ENCODE measurements at regions of chr3 and their contacts with region 1.

Region 1: GRCh38 chr3:183122257-183122932 is 23.1 kb upstream of the MCCC1 start:
- DNase-seq: no peak
- H3K4me3 ChIP-seq: no peak overlapping the region
- H3K27me3 ChIP-seq: peaks cover 2% of the 10 kb centered on the region
- CTCF ChIP-seq: peak; percentile 75

Region 2: GRCh38 chr3:183134844-183135243 is 12.4 kb after region 1 on chr3:
- CTCF ChIA-PET with region 1: interaction called, 12 read pairs
- POLR2A ChIA-PET with region 1: no interaction called
- DNase-seq: no peak
- H3K4me3 ChIP-seq: no peak overlapping the region
- H3K27me3 ChIP-seq: no peaks in the 10 kb centered on the region; the same call in 1 of the 2 replicates
- CTCF ChIP-seq: no peak

Region 3: DNA sequence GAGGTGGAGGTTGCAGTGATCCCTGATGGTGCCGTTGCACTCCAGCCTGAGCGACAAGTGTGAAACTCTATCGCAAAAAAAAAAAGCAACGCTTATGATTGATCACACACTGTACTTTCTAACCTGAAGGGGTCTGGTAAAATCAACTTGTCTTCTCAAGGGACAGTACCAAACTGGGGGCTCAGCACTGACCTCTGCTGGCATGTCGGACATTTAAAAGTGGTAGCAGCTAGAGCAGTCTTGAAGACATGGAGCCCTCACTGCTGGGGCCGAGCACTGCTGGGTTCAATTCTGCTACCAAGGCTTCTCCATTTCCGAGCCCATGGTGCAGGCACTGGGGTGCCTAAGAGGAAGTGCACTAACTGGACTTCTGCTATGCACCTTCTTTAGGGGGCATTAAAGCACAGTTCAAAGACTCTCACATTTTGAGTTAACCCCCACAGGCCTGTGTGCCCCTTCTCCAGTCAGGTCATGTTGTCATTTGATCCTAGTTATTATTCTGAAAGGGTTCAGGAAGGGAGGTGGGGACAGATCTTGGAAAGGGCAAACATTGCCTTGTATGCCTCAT is 66.6 kb after region 1 on chr3:
- CTCF ChIA-PET with region 1: interaction called, 23 read pairs
- POLR2A ChIA-PET with region 1: no interaction called
- DNase-seq: no peak
- H3K4me3 ChIP-seq: no peak overlapping the region
- H3K27me3 ChIP-seq: no peaks in the 10 kb centered on the region
- CTCF ChIP-seq: no peak; the same call in 1 of the 2 replicates

Region 4: GRCh38 chr3:183375787-183376186 is 253.4 kb after region 1 on chr3:
- CTCF ChIA-PET with region 1: interaction called, 102 read pairs
- POLR2A ChIA-PET with region 1: no interaction called
- DNase-seq: no peak
- H3K4me3 ChIP-seq: no peak overlapping the region
- H3K27me3 ChIP-seq: no peaks in the 10 kb centered on the region
- CTCF ChIP-seq: no peak

Region 5: DNA sequence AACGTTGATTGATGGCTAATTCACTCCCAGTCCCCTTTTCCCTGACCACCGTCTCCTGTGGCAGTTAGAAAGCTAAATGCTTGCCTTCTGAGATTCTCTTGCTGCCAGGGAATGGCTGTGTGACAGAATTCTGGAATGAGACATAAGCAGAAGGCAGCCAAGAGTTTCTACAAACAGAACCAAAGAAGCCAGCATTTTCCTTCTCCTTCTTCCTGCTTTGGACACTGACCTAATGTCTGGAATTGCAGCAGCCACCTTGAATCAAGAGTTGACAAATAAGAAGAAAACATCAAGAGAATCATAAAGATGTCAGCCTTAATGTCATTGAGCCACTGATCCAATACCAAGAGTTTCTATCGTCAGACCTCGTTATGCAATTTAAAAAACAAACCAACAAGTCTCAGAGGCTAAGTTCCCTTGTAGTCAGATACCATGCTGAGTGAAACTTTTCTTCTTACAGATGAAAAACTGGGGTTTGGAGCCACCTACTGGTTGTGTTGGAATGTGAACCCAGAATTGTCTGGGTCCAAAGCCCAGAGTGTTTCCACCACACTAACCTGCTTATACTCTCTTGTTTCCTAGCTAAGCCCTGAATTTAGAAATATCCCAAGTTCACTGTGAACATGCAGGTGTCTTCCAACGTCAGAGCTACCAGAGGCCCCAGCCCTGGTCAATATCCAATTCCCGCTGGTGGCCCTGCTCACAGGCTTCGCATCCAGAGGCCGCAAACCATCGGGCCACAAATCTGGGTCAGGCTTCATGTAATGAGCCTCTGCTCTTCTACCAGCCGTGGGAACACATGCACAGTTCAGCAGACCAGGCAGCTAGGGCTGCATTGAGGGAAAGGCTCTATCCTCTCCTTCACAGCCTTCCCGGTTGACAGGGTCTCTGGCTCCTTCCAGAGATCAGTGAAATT is 263.6 kb after region 1 on chr3:
- CTCF ChIA-PET with region 1: interaction called, 102 read pairs
- POLR2A ChIA-PET with region 1: no interaction called
- DNase-seq: no peak
- H3K4me3 ChIP-seq: no peak overlapping the region
- H3K27me3 ChIP-seq: no peaks in the 10 kb centered on the region; the same call in 1 of the 2 replicates
- CTCF ChIP-seq: peak; percentile 69

Measured in BJ (cell line).